ENCODE measurements at regions of chr2 and their contacts with region 1.

Region 1: GRCh38 chr2:216880509-216881184 is 20.8 kb upstream of the TNP1 start:
- DNase-seq: peak; percentile 72 to 90
- ATAC-seq: peak; percentile 87 to 91 (median 88)
- H3K4me3 ChIP-seq: no peak overlapping the region
- H3K27ac ChIP-seq: peak overlapping the region; percentile 90
- H3K4me1 ChIP-seq: peaks cover 75% of the 10 kb centered on the region
- H3K27me3 ChIP-seq: no peaks in the 10 kb centered on the region
- CTCF ChIP-seq: no peak

Region 2: DNA sequence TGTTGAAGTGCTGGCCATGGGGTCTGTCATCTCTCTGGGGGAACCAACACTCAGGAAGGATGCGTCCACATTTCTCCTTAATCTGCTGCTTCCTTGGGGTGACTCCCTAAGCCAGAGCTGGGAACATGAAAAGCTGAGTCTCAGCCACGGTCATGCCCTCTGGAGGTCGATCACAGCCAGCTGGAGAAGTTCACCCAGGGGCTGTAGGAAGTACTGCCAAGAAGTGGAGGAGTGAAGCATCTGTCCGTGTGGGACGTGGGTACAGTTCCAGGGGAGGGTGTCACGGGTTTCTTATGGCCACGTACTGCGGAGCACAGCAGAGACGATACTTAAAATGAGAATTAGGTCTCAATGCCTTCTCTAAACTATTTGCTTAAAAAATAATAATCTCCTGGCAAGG is 289.9 kb before region 1 on chr2:
- intact Hi-C with region 1: no loop called
- DNase-seq: no peak
- ATAC-seq: peak in 3 of 4 donors; percentile 44 to 80 (median 75)
- H3K4me3 ChIP-seq: no peak overlapping the region
- H3K27ac ChIP-seq: no peak overlapping the region
- H3K4me1 ChIP-seq: no peaks in the 10 kb centered on the region
- H3K27me3 ChIP-seq: no peaks in the 10 kb centered on the region
- CTCF ChIP-seq: no peak

Region 3: DNA sequence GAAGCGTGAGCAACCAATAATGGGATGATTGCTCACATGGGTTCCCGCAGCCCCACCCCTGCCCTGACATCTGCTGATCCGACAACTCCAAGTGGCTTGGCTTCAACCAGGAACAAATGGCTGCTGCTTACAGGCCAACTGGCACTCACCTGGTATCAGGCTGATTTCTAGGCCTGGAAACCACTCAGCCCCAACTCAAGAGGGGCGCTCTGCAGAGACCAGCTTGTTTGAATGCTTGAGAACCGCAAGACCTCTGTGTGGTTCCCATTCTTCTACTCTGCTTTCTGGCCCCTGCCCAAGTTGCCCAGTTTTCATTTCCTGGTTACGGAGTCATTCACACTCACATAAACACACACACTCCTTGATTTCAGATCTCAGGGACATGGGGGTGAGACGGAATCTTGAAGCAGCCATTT is 72.8 kb before region 1 on chr2:
- intact Hi-C with region 1: loop called (anchors 2 to 5 kb)
- DNase-seq: peak; percentile 61 to 81
- ATAC-seq: peak; percentile 11 to 46 (median 44)
- H3K4me3 ChIP-seq: no peak overlapping the region
- H3K27ac ChIP-seq: peak overlapping the region; percentile 84
- H3K4me1 ChIP-seq: peaks cover 56% of the 10 kb centered on the region
- H3K27me3 ChIP-seq: no peaks in the 10 kb centered on the region
- CTCF ChIP-seq: no peak

Region 4: DNA sequence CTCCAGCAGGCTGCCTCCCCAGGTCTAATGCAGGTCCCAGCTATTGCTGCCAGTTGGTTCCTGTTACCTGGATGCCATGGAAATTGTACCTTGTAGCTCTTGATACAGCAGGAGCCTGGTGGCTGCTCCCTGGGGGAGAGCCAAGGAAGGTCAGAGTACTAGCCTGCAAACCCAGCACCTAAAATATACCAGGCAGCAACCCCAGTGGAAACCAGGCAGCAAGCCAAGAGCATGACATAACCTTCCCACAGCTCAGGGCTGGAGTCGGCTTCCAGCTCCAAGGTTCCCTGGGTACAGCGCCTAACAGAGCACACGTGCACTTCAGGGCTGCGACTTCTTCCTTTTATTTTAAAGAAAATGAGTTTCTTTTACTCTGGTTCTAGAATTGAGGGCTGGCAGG is 51.1 kb before region 1 on chr2:
- intact Hi-C with region 1: loop called (anchors 5 kb)
- DNase-seq: peak; percentile 74 to 90
- ATAC-seq: peak; percentile 91 to 96 (median 92)
- H3K4me3 ChIP-seq: no peak overlapping the region
- H3K27ac ChIP-seq: peak overlapping the region; percentile 72
- H3K4me1 ChIP-seq: peaks cover 39% of the 10 kb centered on the region
- H3K27me3 ChIP-seq: no peaks in the 10 kb centered on the region
- CTCF ChIP-seq: no peak

Region 5: DNA sequence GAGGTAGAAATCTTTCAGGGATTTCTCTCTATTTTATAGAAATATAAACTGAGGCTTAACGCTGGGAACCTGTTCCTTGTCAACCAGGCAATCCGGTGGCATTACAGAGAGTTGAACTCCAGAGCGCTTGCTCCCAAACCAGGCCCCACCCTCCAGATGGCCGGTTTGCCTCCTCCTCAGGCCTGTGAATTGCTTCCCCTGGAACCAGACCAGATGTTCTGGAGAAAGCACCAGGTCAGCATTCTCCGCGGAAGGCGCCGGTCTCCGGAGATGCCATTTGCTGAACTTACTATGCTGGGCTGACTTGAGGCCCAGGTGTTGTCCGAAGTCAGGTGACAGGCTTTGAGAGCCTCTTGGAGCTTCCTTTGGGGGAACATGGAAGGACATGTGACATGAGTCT is 38.0 kb before region 1 on chr2:
- intact Hi-C with region 1: no loop called
- DNase-seq: peak; percentile 34 to 82
- ATAC-seq: peak; percentile 50 to 87 (median 74)
- H3K4me3 ChIP-seq: no peak overlapping the region
- H3K27ac ChIP-seq: peak overlapping the region; percentile 1
- H3K4me1 ChIP-seq: peaks cover 16% of the 10 kb centered on the region
- H3K27me3 ChIP-seq: no peaks in the 10 kb centered on the region
- CTCF ChIP-seq: no peak